ENCODE measurements at regions of chr10 and their contacts with region 1.

Region 1: DNA sequence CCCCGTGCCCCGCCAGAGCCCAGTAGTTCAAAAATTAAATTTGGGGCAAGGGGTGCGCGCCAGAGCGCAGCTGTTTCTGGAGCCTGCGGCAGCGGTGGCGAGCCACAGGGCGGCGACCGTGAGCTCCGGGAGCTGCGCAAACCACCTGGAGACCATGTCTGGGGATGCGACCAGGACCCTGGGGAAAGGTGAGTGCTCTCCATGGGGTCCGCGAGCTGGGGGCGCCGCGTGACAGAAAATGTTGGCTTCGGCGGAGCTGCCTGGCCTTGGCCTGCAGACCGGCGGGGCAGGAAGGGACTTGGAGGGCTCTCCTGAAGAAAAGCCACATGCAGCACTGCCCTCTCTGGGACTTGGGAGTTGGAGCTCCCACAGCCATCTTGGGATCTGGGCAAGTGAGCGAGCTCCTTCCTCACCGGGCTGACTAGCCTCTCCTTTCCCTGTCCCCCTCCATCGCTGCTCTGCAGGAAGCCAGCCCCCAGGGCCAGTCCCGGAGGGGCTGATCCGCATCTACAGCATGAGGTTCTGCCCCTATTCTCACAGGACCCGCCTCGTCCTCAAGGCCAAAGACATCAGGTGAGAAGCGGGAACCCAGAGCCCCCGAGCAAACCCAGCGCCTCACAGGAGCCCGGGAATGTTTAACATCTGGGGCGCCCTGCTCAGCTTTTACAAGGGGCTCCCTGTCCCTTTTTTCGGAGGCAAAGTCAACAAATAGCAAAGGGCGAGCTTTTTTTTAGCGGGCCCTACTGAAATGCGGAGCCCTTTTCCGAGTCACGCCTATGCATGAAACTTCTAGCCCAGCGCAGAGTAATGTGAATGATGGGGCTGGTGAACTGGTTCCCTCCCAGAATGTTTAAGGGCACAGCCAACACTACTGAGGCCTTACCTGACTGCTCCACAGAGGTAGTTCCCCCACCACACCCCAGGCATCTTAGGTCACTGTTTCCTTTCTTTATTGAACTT is 6.1 kb downstream of the GSTO2 start:
- DNase-seq: peak; percentile 62
- H3K4me3 Mint-ChIP-seq: no peak overlapping the region
- H3K27ac Mint-ChIP-seq: no peak overlapping the region
- H3K4me1 Mint-ChIP-seq: peaks cover 6% of the 10 kb centered on the region
- H3K27me3 Mint-ChIP-seq: peaks cover 33% of the 10 kb centered on the region

Region 2: GRCh38 chr10:104016661-104017060 is 258.4 kb before region 1 on chr10:
- CTCF ChIA-PET with region 1: no interaction called
- DNase-seq: no peak
- H3K4me3 Mint-ChIP-seq: no peak overlapping the region
- H3K27ac Mint-ChIP-seq: no peak overlapping the region
- H3K4me1 Mint-ChIP-seq: no peaks in the 10 kb centered on the region
- H3K27me3 Mint-ChIP-seq: no peaks in the 10 kb centered on the region

Region 3: GRCh38 chr10:104090611-104091010 is 184.4 kb before region 1 on chr10:
- CTCF ChIA-PET with region 1: no interaction called
- DNase-seq: no peak
- H3K4me3 Mint-ChIP-seq: no peak overlapping the region
- H3K27ac Mint-ChIP-seq: no peak overlapping the region
- H3K4me1 Mint-ChIP-seq: no peaks in the 10 kb centered on the region
- H3K27me3 Mint-ChIP-seq: peaks cover 7% of the 10 kb centered on the region

Region 4: GRCh38 chr10:104260775-104261115 is 14.3 kb before region 1 on chr10:
- CTCF ChIA-PET with region 1: interaction called, 19 read pairs
- DNase-seq: no peak
- H3K4me3 Mint-ChIP-seq: no peak overlapping the region
- H3K27ac Mint-ChIP-seq: peak overlapping the region; percentile 50
- H3K4me1 Mint-ChIP-seq: peaks cover 79% of the 10 kb centered on the region
- H3K27me3 Mint-ChIP-seq: no peaks in the 10 kb centered on the region

Region 5: GRCh38 chr10:104300736-104301292 is 25.8 kb after region 1 on chr10:
- CTCF ChIA-PET with region 1: interaction called, 24 read pairs
- DNase-seq: peak; percentile 45
- H3K4me3 Mint-ChIP-seq: no peak overlapping the region
- H3K27ac Mint-ChIP-seq: peak overlapping the region; percentile 65
- H3K4me1 Mint-ChIP-seq: peaks cover 38% of the 10 kb centered on the region
- H3K27me3 Mint-ChIP-seq: peaks cover 29% of the 10 kb centered on the region

Region 6: DNA sequence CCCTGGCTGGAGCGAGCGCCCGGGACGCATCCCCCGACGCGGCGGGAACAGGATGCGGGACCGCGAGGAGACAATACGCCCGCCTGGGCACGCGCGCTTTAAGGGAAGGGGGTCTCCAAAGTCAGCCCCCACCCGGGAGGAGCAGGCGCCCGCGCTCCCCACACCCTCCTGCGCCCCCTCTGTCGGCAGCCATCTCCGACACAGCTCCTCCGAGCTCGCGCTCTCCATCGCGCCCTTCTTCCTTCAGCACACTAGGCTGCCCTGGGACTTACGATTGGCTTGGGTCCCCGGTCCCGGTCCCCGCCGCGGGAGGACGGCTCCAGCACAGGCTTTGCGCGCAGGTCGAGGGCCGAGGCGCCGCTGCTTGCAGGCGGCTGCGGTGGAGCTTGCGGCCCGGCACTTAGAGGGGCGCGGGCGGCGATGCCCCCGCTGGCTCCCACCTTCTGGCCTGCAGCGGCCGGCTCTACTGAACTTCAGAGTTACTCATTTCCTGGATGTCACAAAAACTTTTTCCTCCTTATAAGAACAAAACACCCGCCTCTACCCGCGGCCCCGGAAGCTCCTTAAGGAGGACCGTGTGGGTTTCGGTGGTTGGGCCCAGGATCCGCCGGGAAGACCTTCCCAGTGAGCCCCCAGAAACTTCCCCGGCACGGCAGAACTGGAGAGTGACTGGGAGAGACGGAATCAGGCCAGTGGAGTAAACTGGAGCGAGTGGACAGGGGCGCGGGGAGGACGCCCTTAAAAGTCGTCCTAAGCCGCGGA is 63.1 kb after region 1 on chr10 and contains the start of gene ITPRIP:
- CTCF ChIA-PET with region 1: interaction called, 22 read pairs
- DNase-seq: peak; percentile 80
- H3K4me3 Mint-ChIP-seq: peak within 1 kb of the TSS; percentile 82
- H3K27ac Mint-ChIP-seq: peak within 1 kb of the TSS; percentile 99
- H3K4me1 Mint-ChIP-seq: peaks cover 50% of the 10 kb centered on the region
- H3K27me3 Mint-ChIP-seq: peaks cover 15% of the 10 kb centered on the region

Region 7: GRCh38 chr10:104353325-104354048 is 78.4 kb after region 1 on chr10 and contains the start of gene CFAP58:
- CTCF ChIA-PET with region 1: interaction called, 66 read pairs
- DNase-seq: peak; percentile 94
- H3K4me3 Mint-ChIP-seq: no peak within 1 kb of the TSS
- H3K27ac Mint-ChIP-seq: no peak within 1 kb of the TSS
- H3K4me1 Mint-ChIP-seq: no peaks in the 10 kb centered on the region
- H3K27me3 Mint-ChIP-seq: no peaks in the 10 kb centered on the region